Posterior cingulate gyrus (tissue), 11 donors: ENCODE measurements at regions of chr5 and their contacts with region 1.

Region 1: DNA sequence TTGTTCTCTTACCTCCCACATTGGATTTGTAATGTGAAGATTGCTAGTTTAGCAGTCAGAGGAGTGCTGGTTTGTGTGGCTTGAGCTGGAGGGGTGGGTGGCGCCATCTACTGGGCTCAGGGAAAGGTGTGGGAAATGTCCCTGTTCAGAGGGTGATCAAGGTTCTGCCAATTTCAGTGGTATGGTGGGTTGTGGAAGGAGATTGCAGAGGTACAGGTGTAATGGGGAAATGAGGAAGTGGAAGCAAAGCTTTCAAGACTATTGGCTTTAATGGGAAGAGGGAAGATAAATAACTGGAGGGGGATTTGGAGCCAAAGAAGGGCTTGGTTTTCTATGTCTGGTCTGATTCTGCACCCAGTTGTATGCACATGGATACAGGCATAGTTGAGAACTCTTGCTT is 76.4 kb downstream of the OSMR start:
- DNase-seq: peak in 9 of 10 donors; percentile 16 to 89 (median 50)

Region 2: DNA sequence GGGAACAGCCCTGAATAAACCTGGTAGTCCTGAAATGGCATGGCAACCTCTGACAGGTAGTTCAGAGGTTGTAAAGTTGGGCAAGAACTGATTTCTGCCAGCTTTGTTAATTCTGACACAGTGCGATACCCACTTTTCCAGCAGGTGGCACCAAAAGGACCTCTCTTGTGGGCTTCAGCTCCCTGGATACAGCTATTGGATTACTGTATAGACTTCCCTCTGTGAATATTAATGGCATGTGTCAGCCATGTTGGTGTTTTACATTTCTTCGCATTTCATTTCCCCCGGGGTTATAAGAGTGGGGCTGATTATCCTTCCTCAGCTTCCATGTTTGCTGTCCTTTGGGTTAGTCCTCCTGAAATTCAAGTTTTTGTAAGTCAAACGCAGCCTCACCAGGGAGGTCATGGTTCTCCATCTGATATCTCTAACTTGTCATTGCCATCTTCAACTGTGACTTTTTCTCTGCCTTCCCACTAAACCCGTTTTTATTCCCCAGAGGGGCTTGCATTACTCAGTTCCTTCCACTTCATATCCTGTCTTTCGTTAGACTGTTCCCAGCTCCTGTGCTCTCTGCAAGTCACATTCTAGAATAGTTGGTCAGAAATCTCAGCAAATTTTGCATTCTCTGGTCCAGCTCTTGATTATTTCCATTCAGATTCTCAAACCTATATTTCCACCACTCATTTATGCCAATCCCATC is 501.4 kb before region 1 on chr5:
- intact Hi-C with region 1: loop called (anchors 10 kb)
- DNase-seq: peak in 6 of 10 donors; percentile 44 to 88 (median 62)

Region 3: GRCh38 chr5:38831909-38832308 is 90.3 kb before region 1 on chr5:
- intact Hi-C with region 1: loop called (anchors 5 kb)
- DNase-seq: no peak

Region 4: GRCh38 chr5:39919876-39920275 is 997.7 kb after region 1 on chr5:
- intact Hi-C with region 1: no loop called
- DNase-seq: no peak